Common myeloid progenitor, CD34-positive (primary cell): ENCODE measurements at regions of chr22 and their contacts with region 1.

Region 1: GRCh38 chr22:47290706-47291430 is 528.4 kb downstream of the TBC1D22A start:
- DNase-seq: no peak
- H3K4me3 ChIP-seq: no peak overlapping the region
- H3K27ac ChIP-seq: no peak overlapping the region
- H3K4me1 ChIP-seq: no peaks in the 10 kb centered on the region
- H3K27me3 ChIP-seq: peaks cover 0 to 20% (median 3%) of the 10 kb centered on the region in 5 experiments

Region 2: DNA sequence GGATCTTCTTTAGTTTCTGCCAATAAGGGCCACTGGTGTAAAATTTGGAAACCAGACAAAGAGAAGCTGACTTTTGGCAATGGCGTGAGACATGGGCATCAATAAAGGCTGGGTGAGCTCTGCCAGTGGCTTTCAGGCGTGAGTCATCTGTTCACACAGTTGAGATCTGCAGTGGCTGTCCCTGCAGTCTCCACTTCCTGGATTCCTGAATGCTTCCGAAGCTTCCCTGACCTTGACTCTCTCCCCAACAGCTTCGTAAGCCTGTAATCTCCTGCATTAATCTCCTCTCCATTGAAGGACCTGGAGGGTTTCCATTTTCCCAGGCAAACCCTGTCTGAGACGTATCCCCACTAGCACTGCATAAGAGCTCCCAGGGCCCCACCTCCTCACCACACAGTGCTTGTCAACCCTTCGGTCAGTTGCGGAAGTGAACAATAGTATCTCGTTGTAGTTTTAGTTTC is 46.3 kb after region 1 on chr22:
- CTCF ChIA-PET with region 1: no interaction called
- POLR2A ChIA-PET with region 1: no interaction called
- DNase-seq: peak in 1 of 3 donors; percentile 24
- H3K4me3 ChIP-seq: no peak overlapping the region
- H3K27ac ChIP-seq: no peak overlapping the region
- H3K4me1 ChIP-seq: no peaks in the 10 kb centered on the region
- H3K27me3 ChIP-seq: peaks cover 0 to 12% (median 0%) of the 10 kb centered on the region in 5 experiments

Region 3: GRCh38 chr22:48907591-48907990 is 1616.7 kb after region 1 on chr22:
- CTCF ChIA-PET with region 1: no interaction called
- POLR2A ChIA-PET with region 1: interaction called, 11 read pairs
- DNase-seq: no peak
- H3K4me3 ChIP-seq: no peak overlapping the region
- H3K27ac ChIP-seq: no peak overlapping the region
- H3K4me1 ChIP-seq: no peaks in the 10 kb centered on the region
- H3K27me3 ChIP-seq: peaks cover 0 to 8% (median 0%) of the 10 kb centered on the region in 5 experiments